ENCODE measurements at regions of chr1 and their contacts with region 1.

Region 1: DNA sequence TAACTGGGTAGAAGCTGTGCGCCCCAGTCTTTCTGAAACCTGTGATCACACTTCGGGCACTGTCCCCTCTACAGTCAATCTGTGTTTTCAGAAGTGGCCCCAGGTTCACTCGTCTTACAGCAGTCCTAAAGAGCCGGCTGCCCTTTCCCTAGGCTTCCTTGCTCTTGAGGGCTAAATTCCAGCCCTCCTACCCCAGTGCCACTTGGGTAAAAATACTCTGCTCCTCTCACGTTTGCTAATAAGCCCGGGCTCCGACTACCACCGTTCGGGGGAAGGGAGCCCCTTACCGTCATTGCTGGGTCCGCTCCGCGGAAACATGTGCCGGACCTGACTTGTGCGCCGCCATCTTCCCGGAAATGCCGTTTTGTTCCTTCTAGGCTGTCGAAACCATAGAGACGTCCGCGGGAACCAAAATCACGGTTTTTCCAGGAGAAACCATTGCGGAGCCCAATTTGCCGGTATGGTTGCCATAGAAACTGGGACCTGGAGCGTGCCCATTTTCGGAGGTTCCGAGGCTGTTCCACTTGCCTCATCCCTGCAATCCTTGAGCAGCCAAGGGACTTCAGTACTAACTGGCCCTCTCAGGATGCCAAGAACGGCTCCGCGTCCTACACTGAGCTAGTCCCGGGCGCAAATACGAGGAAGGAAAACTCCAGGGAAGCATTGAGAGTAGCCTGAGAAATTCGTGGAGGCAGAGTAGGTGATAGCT is at the start of gene GPATCH4:
- DNase-seq: peak; percentile 91
- H3K4me3 ChIP-seq: peak within 1 kb of the TSS; percentile 65 to 73 (median 65)
- H3K27ac ChIP-seq: peak within 1 kb of the TSS; percentile 79 to 84 (median 82)
- H3K4me1 ChIP-seq: peaks cover 0 to 20% (median 18%) of the 10 kb centered on the region in 4 donors
- H3K27me3 ChIP-seq: no peaks in the 10 kb centered on the region
- CTCF ChIP-seq: no peak
- EP300 ChIP-seq: peak in 2 of 4 donors; percentile 4 to 8
- POLR2A ChIP-seq: no peak
- total RNA-seq, gene GPATCH4: 12.2 to 22.9 (median 17.3) TPM

Region 2: DNA sequence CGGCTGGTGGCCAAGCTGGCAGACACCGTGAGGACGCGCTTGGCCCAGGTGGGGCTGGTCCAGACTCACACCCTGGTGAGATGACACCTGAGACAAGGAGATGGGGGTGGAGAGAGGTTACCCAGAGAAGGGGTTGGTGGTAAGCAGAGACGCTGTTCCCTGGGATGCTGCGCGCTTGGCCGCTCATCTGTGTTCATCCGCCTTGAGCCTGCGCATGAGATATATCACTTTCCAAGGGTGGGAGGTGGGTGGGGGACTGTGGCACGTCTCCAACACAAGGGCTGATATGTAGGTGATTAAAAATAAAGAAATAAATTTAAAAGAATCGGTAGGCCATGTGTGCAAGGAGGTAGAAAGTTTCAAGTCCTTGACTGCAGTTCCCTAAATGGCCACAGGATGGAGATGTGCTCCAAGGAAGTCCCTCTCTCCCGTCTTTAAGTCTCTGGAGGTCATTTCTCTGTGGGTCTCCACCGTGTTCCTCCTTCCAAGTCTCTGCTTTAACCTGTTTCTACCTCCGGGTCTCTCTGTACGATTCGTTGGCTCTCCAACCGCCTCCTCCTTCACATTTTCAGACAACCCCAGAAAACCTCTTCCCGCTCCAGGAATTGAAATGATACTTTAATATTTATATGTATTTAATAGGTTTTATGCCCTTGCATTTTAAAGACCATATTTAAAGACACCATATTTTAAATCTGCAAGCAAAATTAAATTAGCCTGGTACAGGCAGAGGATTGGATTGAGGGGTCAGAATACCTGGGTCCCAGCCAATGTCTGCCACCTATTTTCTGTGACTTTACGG is 17.3 kb before region 1 on chr1:
- intact Hi-C with region 1: loop called (anchors 2 kb)
- DNase-seq: peak; percentile 87
- H3K4me3 ChIP-seq: no peak overlapping the region
- H3K27ac ChIP-seq: no peak overlapping the region
- H3K4me1 ChIP-seq: peaks cover 0 to 7% (median 0%) of the 10 kb centered on the region in 4 donors
- H3K27me3 ChIP-seq: no peaks in the 10 kb centered on the region
- CTCF ChIP-seq: peak; percentile 80 to 94 (median 88)
- EP300 ChIP-seq: no peak
- POLR2A ChIP-seq: no peak

Measured in sigmoid colon (tissue), 7 donors.